ENCODE measurements at regions of chr12 and their contacts with region 1.

Region 1: GRCh38 chr12:10235761-10236631 is 23.3 kb downstream of the GABARAPL1 start:
- DNase-seq: peak; percentile 50
- CTCF ChIP-seq: peak; percentile 78

Region 2: DNA sequence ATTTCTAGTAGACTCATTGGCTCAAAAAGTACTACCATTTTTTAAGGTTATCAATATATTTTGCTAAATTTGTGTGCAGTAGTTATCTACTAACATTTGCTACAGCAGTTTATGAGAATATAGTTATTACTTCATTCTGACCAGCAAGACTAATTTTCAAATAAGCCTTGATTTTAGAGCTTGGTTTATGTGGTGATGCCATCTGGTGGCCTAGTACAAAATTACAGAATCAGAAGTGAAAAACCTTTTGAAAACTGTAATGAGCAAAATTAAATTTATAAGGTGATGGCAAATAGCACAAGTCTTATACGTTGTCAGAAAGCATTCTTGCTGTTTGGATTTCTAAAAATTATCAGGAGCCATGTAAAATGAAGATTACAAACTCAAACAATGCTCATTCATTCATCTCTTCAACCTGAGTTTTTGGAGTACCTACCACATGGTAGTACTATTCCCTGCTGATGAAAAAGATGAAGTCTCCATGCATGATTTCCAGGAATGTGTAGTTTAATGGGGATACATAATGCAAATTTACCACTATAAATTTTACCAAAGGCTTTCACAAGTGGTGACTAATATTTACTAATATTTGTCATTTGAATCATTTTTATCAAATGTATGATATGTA is 326.4 kb after region 1 on chr12:
- in situ Hi-C with region 1: loop called (anchors 5 kb)
- DNase-seq: peak; percentile 42
- CTCF ChIP-seq: peak; percentile 30

Region 3: GRCh38 chr12:10690906-10691305 is 454.9 kb after region 1 on chr12:
- in situ Hi-C with region 1: loop called (anchors 25 kb)
- DNase-seq: no peak
- CTCF ChIP-seq: no peak

Region 4: GRCh38 chr12:11486623-11487444 is 1250.8 kb after region 1 on chr12:
- in situ Hi-C with region 1: loop called (anchors 25 kb)
- DNase-seq: peak; percentile 72
- CTCF ChIP-seq: peak; percentile 75

Measured in GM13976 (cell line).